Right ventricle myocardium inferior (tissue), 1 donor: ENCODE measurements at regions of chr13 and their contacts with region 1.

Region 1: GRCh38 chr13:102580552-102581169 is 16.1 kb upstream of the TPP2 start:
- DNase-seq: no peak
- ATAC-seq: peak; percentile 59

Region 2: DNA sequence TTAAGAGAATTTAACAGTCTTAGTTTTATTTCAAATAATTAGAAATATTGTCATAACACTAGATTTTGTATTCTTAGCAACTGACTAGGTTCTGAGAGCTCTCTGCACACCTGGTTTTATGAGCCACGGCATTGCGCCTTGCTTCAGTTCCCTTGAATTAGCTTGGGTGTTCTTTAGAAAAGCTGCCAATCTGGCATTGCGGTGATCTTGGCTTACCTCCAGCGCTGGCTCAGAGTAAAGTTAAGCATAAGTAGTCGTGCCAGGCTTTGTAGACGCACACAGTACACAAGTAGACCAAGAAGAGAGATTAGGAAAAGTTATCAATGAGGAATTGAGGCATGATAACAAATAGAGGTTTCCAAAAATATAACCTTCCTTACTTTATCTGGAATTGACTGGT is 61.8 kb after region 1 on chr13:
- intact Hi-C with region 1: no loop called
- DNase-seq: no peak
- ATAC-seq: peak; percentile 73

Region 3: DNA sequence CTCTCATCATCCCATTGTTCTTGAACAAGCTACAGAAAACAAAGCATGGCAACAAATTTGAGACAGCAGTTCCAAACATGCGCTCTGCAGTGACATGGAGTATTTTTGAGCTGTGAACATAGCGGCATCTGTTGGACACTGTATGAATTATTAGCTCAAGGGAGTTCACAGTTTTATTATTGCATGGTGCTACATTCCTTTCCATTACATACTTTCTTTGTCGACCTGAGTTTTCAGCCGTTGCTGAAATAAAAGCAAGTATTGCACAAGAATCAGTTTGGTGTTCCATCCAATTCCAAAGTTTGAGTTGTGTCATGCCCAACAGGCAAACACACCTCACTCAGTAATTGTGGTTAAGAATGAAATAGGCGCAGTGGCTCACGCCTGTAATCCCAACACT is 144.3 kb after region 1 on chr13:
- intact Hi-C with region 1: loop called (anchors 5 kb)
- DNase-seq: no peak
- ATAC-seq: no peak

Region 4: DNA sequence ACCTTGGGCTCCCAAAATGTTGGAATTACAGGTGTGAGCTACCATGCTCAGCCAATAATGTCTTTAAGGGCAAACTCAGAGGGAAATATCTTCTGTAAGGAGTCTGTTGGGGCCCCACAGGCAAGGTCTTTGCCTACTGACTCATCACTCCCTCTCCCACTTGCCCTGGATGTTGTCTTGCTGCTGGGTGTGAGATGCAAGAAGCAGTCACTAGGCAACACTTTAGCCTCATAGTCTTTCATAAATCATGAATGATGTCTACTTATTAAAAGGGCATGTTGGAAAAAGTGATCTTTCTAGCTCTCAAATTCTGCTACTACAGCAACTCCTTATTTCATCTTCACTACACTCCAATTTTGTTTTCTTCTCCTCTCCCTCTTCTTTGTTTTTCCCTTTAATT is 520.2 kb after region 1 on chr13:
- intact Hi-C with region 1: no loop called
- DNase-seq: no peak
- ATAC-seq: no peak